ENCODE measurements at regions of chr12 and their contacts with region 1.

Region 1: DNA sequence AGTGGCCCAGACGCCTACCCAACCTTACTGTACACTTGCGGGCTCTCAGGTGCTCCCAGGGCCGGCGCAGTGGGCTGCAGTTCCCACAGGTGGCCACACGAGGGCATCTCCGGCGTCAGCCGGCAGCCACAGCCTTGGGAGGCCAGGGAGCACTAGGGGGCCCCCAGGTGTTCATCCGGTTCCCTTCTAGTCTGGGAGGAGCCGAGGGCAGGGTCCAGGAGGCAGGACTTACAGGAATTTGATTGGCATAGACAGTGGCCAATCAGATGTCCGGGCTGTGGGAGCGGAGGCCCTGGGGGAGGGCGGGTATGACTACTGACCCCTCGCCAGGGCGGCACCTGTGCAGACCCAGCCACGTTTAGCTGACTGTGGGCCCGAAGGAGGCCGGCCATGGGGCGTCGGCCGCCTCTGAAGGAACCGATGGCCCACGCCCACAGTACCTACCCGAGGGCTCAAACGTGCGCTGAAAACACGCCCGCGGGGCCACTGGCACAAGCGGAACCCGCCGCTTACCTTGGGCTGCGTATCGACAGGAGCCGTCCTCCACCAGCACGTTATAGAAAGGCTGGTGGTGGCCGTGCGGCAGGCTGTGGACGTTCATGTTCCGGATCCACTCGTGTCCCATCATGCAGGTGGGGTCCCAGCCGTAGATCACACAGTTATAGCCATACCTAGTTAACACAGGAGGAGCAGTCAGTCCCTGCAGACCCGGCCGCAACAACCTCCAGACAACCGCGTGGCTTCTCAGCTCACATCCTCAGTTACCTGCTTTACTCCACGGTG is 34.8 kb downstream of the FBXO21 start:
- DNase-seq: peak; percentile 95
- ATAC-seq: peak; percentile 99
- H3K4me3 ChIP-seq: no peak overlapping the region
- H3K27ac ChIP-seq: no peak overlapping the region
- H3K4me1 ChIP-seq: peaks cover 11% of the 10 kb centered on the region
- H3K27me3 ChIP-seq: no peaks in the 10 kb centered on the region
- CTCF ChIP-seq: peak; percentile 97
- EP300 ChIP-seq: peak in 1 of 2 experiments; percentile 30; a peak in 1 of 4 replicates
- POLR2A ChIP-seq: no peak
- RAD21 ChIP-seq: peak; percentile 80

Region 2: DNA sequence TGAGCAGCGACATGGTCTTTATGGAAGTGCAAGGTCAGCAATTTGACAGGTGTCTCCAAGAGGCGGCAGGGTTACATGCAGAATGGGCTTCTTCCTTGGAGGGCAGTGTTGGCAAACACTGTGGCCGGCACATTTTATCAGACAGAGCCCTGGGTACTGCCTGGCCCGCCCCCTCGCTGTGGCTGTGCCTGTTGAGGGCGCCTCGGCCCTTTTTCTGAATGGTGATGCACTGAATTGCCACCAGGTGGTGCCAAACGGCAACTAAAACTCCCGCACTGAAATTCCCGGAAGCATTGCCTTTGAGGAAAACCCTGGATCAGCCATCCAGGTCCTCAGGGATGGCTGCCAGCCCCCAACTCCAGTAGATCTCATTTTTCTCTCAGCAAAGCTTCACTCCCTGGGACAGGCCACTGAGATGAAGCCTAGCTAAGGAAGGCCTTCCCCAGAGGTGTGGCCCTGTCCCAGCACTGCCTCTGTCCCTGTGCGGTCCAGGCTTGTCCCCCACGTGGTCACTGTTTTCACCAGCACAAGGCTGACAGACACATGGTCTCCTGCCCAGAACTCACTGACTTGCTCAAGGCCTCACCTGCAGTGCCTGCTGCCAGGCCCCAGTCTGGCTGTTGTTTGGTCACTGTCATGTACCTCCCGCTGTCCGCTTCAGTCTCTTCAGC is 129.9 kb before region 1 on chr12:
- CTCF ChIA-PET with region 1: interaction called, 16 read pairs
- POLR2A ChIA-PET with region 1: no interaction called
- in situ Hi-C with region 1: no loop called
- intact Hi-C with region 1: no loop called
- DNase-seq: peak; percentile 68
- ATAC-seq: peak; percentile 84
- H3K4me3 ChIP-seq: no peak overlapping the region
- H3K27ac ChIP-seq: no peak overlapping the region
- H3K4me1 ChIP-seq: peaks cover 7% of the 10 kb centered on the region; the same call in 1 of the 2 replicates
- H3K27me3 ChIP-seq: no peaks in the 10 kb centered on the region
- CTCF ChIP-seq: peak; percentile 91
- EP300 ChIP-seq: no peak
- POLR2A ChIP-seq: no peak
- RAD21 ChIP-seq: peak; percentile 92

Region 3: GRCh38 chr12:117143008-117143532 is 12.4 kb before region 1 on chr12:
- CTCF ChIA-PET with region 1: no interaction called
- POLR2A ChIA-PET with region 1: no interaction called
- in situ Hi-C with region 1: no loop called
- intact Hi-C with region 1: loop called (anchors 1 kb)
- DNase-seq: peak; percentile 92
- ATAC-seq: peak; percentile 76
- H3K4me3 ChIP-seq: peak overlapping the region in 1 of 3 experiments; percentile 22; a peak in 1 of 6 replicates
- H3K27ac ChIP-seq: peak overlapping the region; percentile 59
- H3K4me1 ChIP-seq: peaks cover 22% of the 10 kb centered on the region
- H3K27me3 ChIP-seq: no peaks in the 10 kb centered on the region
- CTCF ChIP-seq: no peak
- EP300 ChIP-seq: peak in 1 of 2 experiments; percentile 66; a peak in 1 of 4 replicates
- POLR2A ChIP-seq: no peak
- RAD21 ChIP-seq: no peak